ENCODE measurements at regions of chr6 and their contacts with region 1.

Region 1: DNA sequence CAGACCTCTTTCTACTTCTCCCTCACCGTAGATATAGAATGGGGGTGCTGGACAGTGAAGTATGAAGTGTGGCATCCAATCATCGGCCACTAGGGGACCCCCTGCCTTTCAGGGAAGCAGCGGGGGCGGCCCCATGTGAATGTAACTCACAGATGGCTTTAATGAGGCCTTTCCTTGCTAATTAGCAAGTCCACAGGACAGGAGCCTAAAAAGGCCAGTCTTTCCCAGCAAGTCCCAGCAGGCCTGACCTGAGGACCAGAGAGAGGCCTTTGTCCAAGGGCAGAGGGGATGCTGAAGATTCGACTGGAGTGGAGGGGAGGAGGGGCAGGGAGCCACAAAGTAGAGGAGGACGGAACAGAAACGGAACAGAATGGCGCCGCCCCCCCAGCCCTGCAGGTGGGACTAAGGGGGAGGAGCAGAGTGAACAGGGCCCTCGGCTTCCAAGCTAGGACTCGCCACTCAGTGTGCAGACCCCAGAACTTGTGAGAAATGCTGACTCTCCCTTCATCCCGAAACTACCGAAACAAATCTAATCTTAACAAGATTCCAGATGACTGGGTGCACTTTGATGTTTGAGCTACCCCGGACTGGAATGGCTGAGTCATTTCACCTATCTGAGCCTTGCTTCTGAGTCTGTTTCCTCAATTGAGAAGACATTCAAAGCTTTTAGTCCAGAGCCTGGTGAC is 5.8 kb downstream of the C6orf132 start:
- DNase-seq: peak; percentile 61
- ATAC-seq: peak; percentile 59
- H3K4me3 ChIP-seq: peak overlapping the region; percentile 24 to 64 (median 52)
- H3K27ac ChIP-seq: peak overlapping the region; percentile 60
- H3K4me1 ChIP-seq: peaks cover 75% of the 10 kb centered on the region
- H3K27me3 ChIP-seq: no peaks in the 10 kb centered on the region; a peak in 1 of 5 replicates
- CTCF ChIP-seq: peak; percentile 68
- EP300 ChIP-seq: peak in 1 of 2 experiments; percentile 58; a peak in 1 of 4 replicates
- POLR2A ChIP-seq: no peak
- RAD21 ChIP-seq: no peak

Region 2: DNA sequence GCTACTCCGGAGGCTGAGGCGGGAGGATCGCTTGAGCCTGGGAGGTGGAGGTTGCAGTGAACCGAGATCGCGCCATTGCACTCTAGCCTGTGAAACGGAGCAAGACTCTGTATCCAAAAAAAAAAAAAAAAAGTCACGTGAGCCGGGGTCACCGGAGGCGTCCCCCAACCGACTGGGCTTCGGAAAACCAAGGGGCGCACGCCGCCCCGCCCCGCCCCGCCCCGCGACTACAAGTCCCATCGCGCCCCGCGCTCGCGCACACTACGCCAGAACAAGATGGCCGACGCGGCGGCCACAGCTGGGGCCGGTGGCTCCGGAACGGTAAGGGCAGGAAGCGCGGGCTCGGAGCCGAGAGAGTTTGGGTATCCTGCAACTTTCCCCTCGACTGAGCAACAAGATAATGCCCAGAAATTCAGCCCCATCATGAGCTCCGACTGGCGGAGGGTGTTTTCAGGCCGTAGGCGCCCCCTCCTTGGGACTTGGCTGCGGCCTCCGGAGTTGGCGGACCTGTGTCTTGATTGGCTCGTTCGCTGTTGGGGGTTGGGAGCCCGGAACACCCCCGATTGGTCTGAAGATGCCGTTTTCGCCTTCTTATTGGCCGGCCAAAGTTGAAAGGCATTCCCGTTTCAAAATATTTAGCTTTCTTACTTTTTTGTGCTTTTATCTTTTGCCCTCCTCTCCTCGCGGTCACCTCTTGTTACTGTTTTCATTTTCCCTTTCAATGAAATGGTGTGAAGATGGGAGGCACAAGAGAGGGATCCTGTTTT is 86.2 kb before region 1 on chr6 and contains the start of gene TAF8:
- CTCF ChIA-PET with region 1: no interaction called
- POLR2A ChIA-PET with region 1: interaction called, 13 read pairs
- in situ Hi-C with region 1: no loop called
- intact Hi-C with region 1: no loop called
- DNase-seq: peak; percentile 94
- ATAC-seq: peak; percentile 90
- H3K4me3 ChIP-seq: peak within 1 kb of the TSS; percentile 68 to 100 (median 99)
- H3K27ac ChIP-seq: peak within 1 kb of the TSS; percentile 96
- H3K4me1 ChIP-seq: peaks cover 53% of the 10 kb centered on the region
- H3K27me3 ChIP-seq: no peaks in the 10 kb centered on the region; a peak in 2 of 5 replicates
- CTCF ChIP-seq: peak; percentile 29; the same call in 1 of the 2 replicates
- EP300 ChIP-seq: peak; percentile 20 to 82; a peak in 1 of 4 replicates
- POLR2A ChIP-seq: peak; percentile 91 to 100
- RAD21 ChIP-seq: peak; percentile 57
- total RNA-seq, gene TAF8: 20.2 and 25.2 TPM in 2 replicates

Region 3: GRCh38 chr6:42095785-42096541 is 40.7 kb before region 1 on chr6:
- CTCF ChIA-PET with region 1: no interaction called
- POLR2A ChIA-PET with region 1: interaction called, 34 read pairs
- in situ Hi-C with region 1: no loop called
- intact Hi-C with region 1: loop called (anchors 2 kb)
- DNase-seq: peak; percentile 74
- ATAC-seq: peak; percentile 67
- H3K4me3 ChIP-seq: no peak overlapping the region; a peak in 1 of 6 replicates
- H3K27ac ChIP-seq: no peak overlapping the region
- H3K4me1 ChIP-seq: peaks cover 65% of the 10 kb centered on the region
- H3K27me3 ChIP-seq: peaks cover 0 to 6% of the 10 kb centered on the region in 2 experiments; a peak in 1 of 5 replicates
- CTCF ChIP-seq: peak; percentile 75
- EP300 ChIP-seq: no peak
- POLR2A ChIP-seq: no peak
- RAD21 ChIP-seq: peak; percentile 36; the same call in 1 of the 2 replicates

Region 4: GRCh38 chr6:42104095-42104806 is 32.4 kb before region 1 on chr6:
- CTCF ChIA-PET with region 1: no interaction called
- POLR2A ChIA-PET with region 1: interaction called, 34 read pairs
- in situ Hi-C with region 1: no loop called
- intact Hi-C with region 1: no loop called
- DNase-seq: peak; percentile 61
- ATAC-seq: peak; percentile 36
- H3K4me3 ChIP-seq: peak overlapping the region in 1 of 3 experiments; percentile 35; a peak in 2 of 6 replicates
- H3K27ac ChIP-seq: no peak overlapping the region
- H3K4me1 ChIP-seq: peaks cover 77% of the 10 kb centered on the region
- H3K27me3 ChIP-seq: no peaks in the 10 kb centered on the region
- CTCF ChIP-seq: peak; percentile 76
- EP300 ChIP-seq: no peak
- POLR2A ChIP-seq: no peak
- RAD21 ChIP-seq: peak; percentile 64

Region 5: GRCh38 chr6:42118162-42119001 is 18.3 kb before region 1 on chr6:
- CTCF ChIA-PET with region 1: no interaction called
- POLR2A ChIA-PET with region 1: interaction called, 22 read pairs
- in situ Hi-C with region 1: no loop called
- intact Hi-C with region 1: loop called (anchors 1 kb)
- DNase-seq: peak; percentile 83
- ATAC-seq: peak; percentile 91
- H3K4me3 ChIP-seq: peak overlapping the region in 1 of 3 experiments; percentile 42; a peak in 2 of 6 replicates
- H3K27ac ChIP-seq: peak overlapping the region; percentile 57
- H3K4me1 ChIP-seq: peaks cover 46% of the 10 kb centered on the region
- H3K27me3 ChIP-seq: no peaks in the 10 kb centered on the region
- CTCF ChIP-seq: 0 out of 2 replicates have a peak, but pooled peaks have one; percentile 32
- EP300 ChIP-seq: peak in 1 of 2 experiments; percentile 37; a peak in 1 of 4 replicates
- POLR2A ChIP-seq: no peak
- RAD21 ChIP-seq: 0 out of 2 replicates have a peak, but pooled peaks have one; percentile 20